ENCODE measurements at regions of chr20 and their contacts with region 1.

Region 1: DNA sequence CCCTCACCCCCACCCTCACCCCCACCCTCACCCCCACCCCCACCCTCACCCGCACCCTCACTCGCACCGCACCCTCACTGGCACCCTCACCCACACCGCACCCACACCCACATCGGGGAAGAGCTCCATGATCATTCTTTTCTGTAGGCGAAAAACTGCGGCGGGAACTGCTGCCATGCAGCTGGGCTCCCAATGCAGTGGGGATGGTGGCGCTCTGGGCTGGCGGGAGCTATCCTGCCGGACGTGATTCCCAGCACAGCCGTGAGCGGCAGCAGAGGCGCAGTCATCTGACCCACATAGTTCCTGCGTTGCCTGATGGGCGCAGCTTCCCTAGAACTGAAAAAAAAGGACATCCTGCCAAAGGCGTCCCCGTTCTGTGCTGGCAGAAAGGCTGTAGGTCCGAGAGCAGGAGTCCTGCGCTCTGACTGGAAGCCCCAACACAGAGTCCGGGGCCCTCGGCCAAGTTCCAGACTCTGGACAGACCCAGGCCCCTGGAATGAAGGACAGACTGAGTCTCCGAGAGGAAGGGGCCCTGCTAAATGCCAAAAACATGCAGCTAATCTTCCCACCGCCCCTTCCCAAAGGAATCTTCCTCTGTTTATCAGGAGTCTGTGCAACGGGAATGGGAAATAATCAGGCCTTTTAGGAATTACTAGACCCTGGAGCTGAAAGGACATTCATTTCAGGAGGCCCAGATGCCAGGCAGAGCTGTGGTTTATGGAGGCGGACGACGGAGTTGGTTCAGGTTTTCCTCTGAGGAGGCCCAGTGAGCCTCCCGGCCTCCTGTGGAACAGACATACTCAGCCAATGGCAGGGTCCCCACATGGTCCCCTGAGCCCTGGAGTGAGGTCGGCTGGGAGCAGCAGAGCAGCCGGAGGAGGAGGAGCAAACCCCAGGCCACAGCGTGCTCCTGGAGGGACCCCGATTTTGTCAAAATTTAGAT is 14.1 kb upstream of the TCFL5 start:
- DNase-seq: peak; percentile 81
- H3K27ac ChIP-seq: peak overlapping the region; percentile 80
- CTCF ChIP-seq: peak; percentile 66

Region 2: DNA sequence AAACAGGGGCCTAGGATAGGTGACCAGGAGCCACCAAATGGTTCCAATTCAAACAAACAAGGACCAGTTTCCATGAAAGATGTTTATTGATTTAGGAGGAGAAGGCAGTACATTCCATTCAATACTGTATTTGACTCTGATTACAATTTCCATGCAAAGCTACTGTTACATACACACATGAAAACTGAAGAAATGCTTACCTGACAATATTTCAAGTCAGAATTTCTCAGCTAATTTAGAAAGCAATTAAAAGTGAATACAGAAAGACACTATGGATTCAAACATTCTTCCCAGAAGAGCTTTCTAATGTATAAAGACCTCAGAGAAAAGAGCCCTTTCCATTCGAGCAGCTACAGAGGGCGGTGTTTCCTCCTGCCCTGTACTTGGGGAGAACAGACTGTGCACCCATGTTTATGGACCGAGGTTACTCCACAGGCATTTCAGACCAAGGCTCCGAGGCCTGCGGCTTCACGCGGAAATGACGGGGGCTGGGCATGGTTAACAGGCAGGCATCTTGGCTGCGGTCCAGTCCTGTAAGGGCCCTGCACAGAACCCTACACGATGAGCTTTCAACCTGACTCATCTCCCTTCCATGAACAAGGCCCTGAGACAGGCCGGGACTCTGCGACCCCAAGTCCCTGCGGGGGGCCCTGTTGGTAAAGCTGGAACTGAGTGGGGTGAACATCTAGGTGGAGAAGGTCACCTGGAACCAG is 11.6 kb after region 1 on chr20:
- CTCF ChIA-PET with region 1: interaction called, 14 read pairs
- POLR2A ChIA-PET with region 1: interaction called, 5 read pairs
- DNase-seq: peak; percentile 96
- H3K27ac ChIP-seq: peak overlapping the region; percentile 75
- CTCF ChIP-seq: no peak